GM12878 (cell line): ENCODE measurements at regions of chr12 and their contacts with region 1.

Region 1: GRCh38 chr12:40224439-40225291 is at the start of gene LRRK2:
- DNase-seq: no peak
- ATAC-seq: peak; percentile 69
- H3K4me3 ChIP-seq: peak within 1 kb of the TSS; percentile 59
- H3K27ac ChIP-seq: peak within 1 kb of the TSS; percentile 46
- H3K4me1 ChIP-seq: peaks cover 9% of the 10 kb centered on the region
- H3K27me3 ChIP-seq: peaks cover 0 to 17% of the 10 kb centered on the region in 2 experiments; a peak in 1 of 4 replicates
- CTCF ChIP-seq: no peak
- EP300 ChIP-seq: peak; percentile 61 to 70; a peak in 2 of 4 replicates
- POLR2A ChIP-seq: peak; percentile 61
- RAD21 ChIP-seq: no peak
- polyA plus RNA-seq, gene LRRK2: 0.97 to 1.1 TPM

Region 2: GRCh38 chr12:39628836-39629235 is 595.8 kb before region 1 on chr12:
- CTCF ChIA-PET with region 1: no interaction called
- POLR2A ChIA-PET with region 1: no interaction called
- RAD21 ChIA-PET with region 1: no interaction called
- SMC1A ChIA-PET with region 1: no interaction called
- in situ Hi-C with region 1: no loop called
- intact Hi-C with region 1: no loop called
- DNase-seq: no peak
- ATAC-seq: peak; percentile 67
- H3K4me3 ChIP-seq: no peak overlapping the region
- H3K27ac ChIP-seq: no peak overlapping the region
- H3K4me1 ChIP-seq: peaks cover 10% of the 10 kb centered on the region
- H3K27me3 ChIP-seq: no peaks in the 10 kb centered on the region
- CTCF ChIP-seq: no peak
- EP300 ChIP-seq: no peak
- POLR2A ChIP-seq: no peak
- RAD21 ChIP-seq: no peak

Region 3: GRCh38 chr12:40117818-40118217 is 106.8 kb before region 1 on chr12:
- CTCF ChIA-PET with region 1: interaction called, 4 read pairs
- POLR2A ChIA-PET with region 1: no interaction called
- RAD21 ChIA-PET with region 1: interaction called, 6 read pairs
- SMC1A ChIA-PET with region 1: interaction called, 4 read pairs
- in situ Hi-C with region 1: no loop called
- intact Hi-C with region 1: loop called (anchors 5 kb)
- DNase-seq: peak; percentile 51
- ATAC-seq: peak; percentile 94
- H3K4me3 ChIP-seq: no peak overlapping the region
- H3K27ac ChIP-seq: no peak overlapping the region
- H3K4me1 ChIP-seq: peaks cover 3% of the 10 kb centered on the region; the same call in 1 of the 2 replicates
- H3K27me3 ChIP-seq: no peaks in the 10 kb centered on the region; a peak in 1 of 4 replicates
- CTCF ChIP-seq: no peak
- EP300 ChIP-seq: peak; percentile 44 to 59; a peak in 2 of 4 replicates
- POLR2A ChIP-seq: no peak
- RAD21 ChIP-seq: no peak

Region 4: GRCh38 chr12:40158592-40159111 is 66.0 kb before region 1 on chr12:
- CTCF ChIA-PET with region 1: interaction called, 12 read pairs
- POLR2A ChIA-PET with region 1: interaction called, 4 read pairs
- RAD21 ChIA-PET with region 1: interaction called, 15 read pairs
- SMC1A ChIA-PET with region 1: interaction called, 65 read pairs
- in situ Hi-C with region 1: no loop called
- intact Hi-C with region 1: loop called (anchors 1 kb)
- DNase-seq: no peak
- ATAC-seq: peak; percentile 84
- H3K4me3 ChIP-seq: no peak overlapping the region
- H3K27ac ChIP-seq: peak overlapping the region; percentile 53; the same call in 1 of the 2 replicates
- H3K4me1 ChIP-seq: peaks cover 10% of the 10 kb centered on the region
- H3K27me3 ChIP-seq: no peaks in the 10 kb centered on the region
- CTCF ChIP-seq: no peak
- EP300 ChIP-seq: no peak
- POLR2A ChIP-seq: no peak
- RAD21 ChIP-seq: no peak

Region 5: DNA sequence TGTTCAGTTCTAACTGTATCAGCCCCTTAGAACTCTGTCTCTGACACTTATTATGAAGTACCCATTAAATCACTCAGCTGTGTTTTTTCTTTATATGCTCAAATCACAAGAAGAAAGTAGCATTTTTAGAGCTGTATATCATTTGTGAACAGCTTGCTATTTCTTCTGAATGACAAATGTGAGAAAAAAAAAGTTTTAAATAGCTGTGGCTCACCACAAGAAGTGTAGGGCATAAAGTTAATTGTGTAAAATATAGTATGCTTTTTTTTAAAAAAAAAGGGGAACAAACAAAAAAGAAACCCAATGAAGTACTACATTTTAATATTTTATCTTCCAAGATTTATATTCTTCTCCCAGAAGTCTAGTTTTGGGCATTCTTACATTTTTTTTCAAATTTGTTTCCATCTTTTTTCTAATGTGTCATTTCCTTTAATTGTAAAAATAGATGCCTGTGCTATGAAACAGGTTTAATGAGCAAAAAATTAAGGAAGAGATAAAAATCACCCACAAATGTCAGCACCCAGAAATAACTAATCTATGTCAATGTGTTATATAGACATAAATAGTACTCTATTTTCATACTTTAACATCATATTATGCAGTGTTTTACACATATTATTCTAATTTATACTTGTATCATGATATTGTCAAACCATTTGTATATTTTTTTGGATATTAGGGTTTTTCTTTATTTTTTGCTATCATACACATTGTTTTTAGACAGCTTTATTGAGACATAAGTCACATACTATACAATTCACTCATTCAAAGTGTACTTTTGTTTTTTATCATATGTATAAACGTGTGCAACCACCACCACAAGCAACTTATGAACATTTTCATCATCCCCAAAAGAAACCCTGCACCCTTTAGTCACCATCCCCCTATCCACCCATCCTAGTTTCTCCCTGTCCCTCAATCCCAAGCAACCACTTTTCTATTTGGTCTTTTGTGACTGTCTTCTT is 22.3 kb before region 1 on chr12:
- CTCF ChIA-PET with region 1: interaction called, 21 read pairs
- POLR2A ChIA-PET with region 1: interaction called, 15 read pairs
- RAD21 ChIA-PET with region 1: interaction called, 44 read pairs
- SMC1A ChIA-PET with region 1: interaction called, 60 read pairs
- in situ Hi-C with region 1: no loop called
- intact Hi-C with region 1: no loop called
- DNase-seq: no peak
- ATAC-seq: peak; percentile 79
- H3K4me3 ChIP-seq: no peak overlapping the region
- H3K27ac ChIP-seq: no peak overlapping the region
- H3K4me1 ChIP-seq: no peaks in the 10 kb centered on the region
- H3K27me3 ChIP-seq: no peaks in the 10 kb centered on the region
- CTCF ChIP-seq: no peak
- EP300 ChIP-seq: peak in 1 of 2 experiments; percentile 44; a peak in 1 of 4 replicates
- POLR2A ChIP-seq: no peak
- RAD21 ChIP-seq: no peak

Region 6: DNA sequence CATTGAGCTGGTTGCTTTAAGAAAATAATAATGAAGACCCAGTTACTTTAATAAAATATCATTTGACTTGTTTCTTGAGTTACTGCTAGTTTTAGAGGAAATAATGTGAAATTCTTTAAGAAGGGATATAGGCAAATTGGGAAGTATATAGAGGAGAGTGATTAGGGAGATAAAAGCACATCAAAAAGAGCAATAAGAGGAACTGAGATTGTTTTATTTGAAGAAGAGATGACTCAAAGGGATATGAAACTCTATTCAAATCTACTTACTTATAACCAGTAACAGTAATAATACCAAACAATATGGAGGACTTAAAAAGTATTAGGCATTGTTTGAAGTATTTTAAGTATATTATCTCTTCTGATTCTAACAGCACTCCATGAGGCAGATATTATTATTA is 37.3 kb after region 1 on chr12:
- CTCF ChIA-PET with region 1: interaction called, 5 read pairs
- POLR2A ChIA-PET with region 1: no interaction called
- RAD21 ChIA-PET with region 1: interaction called, 14 read pairs
- SMC1A ChIA-PET with region 1: interaction called, 15 read pairs
- in situ Hi-C with region 1: no loop called
- intact Hi-C with region 1: loop called (anchors 2 kb)
- DNase-seq: no peak
- ATAC-seq: peak; percentile 84
- H3K4me3 ChIP-seq: no peak overlapping the region
- H3K27ac ChIP-seq: no peak overlapping the region
- H3K4me1 ChIP-seq: peaks cover 13% of the 10 kb centered on the region
- H3K27me3 ChIP-seq: no peaks in the 10 kb centered on the region
- CTCF ChIP-seq: no peak
- EP300 ChIP-seq: peak; percentile 50 to 72
- POLR2A ChIP-seq: no peak
- RAD21 ChIP-seq: no peak

Region 7: GRCh38 chr12:40634517-40635131 is 410.0 kb after region 1 on chr12:
- CTCF ChIA-PET with region 1: no interaction called
- POLR2A ChIA-PET with region 1: no interaction called
- RAD21 ChIA-PET with region 1: no interaction called
- SMC1A ChIA-PET with region 1: no interaction called
- in situ Hi-C with region 1: no loop called
- intact Hi-C with region 1: no loop called
- DNase-seq: no peak
- ATAC-seq: no peak
- H3K4me3 ChIP-seq: no peak overlapping the region
- H3K27ac ChIP-seq: no peak overlapping the region
- H3K4me1 ChIP-seq: no peaks in the 10 kb centered on the region
- H3K27me3 ChIP-seq: no peaks in the 10 kb centered on the region
- CTCF ChIP-seq: no peak
- EP300 ChIP-seq: no peak
- POLR2A ChIP-seq: no peak
- RAD21 ChIP-seq: no peak